ENCODE measurements at regions of chr5 and their contacts with region 1.

Region 1: GRCh38 chr5:100818340-100818739 is 84.7 kb downstream of the ST8SIA4 start:
- DNase-seq: no peak
- ATAC-seq: no peak
- H3K4me3 ChIP-seq: no peak overlapping the region
- H3K4me3 Mint-ChIP-seq: no peak overlapping the region
- H3K27ac ChIP-seq: no peak overlapping the region
- H3K27ac Mint-ChIP-seq: peak overlapping the region in 3 of 9 donors; percentile 23 to 58 (median 43)
- H3K4me1 ChIP-seq: no peaks in the 10 kb centered on the region
- H3K4me1 Mint-ChIP-seq: peaks cover 6 to 58% (median 30%) of the 10 kb centered on the region in 7 donors
- H3K27me3 ChIP-seq: no peaks in the 10 kb centered on the region
- H3K27me3 Mint-ChIP-seq: no peaks in the 10 kb centered on the region

Region 2: DNA sequence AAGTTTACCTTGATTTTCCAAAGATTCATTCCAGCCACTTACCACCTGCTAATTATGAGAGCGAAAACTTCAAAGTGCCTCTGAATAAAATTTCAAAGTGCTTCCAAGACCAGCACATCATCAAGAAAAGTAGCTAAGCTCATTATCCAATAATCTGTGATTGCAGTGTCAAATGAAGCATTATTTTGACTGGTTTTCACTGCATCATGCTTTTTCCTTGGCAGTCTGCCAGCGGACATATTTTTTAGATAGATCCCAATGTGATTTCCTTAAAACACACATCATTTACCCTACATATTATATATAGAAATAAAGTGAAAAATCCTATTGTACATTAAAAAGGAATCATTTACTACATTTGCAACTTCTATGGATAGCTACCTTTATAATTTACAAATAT is 791.7 kb before region 1 on chr5:
- CTCF ChIA-PET with region 1: no interaction called
- POLR2A ChIA-PET with region 1: no interaction called
- intact Hi-C with region 1: no loop called
- DNase-seq: no peak
- ATAC-seq: no peak
- H3K4me3 ChIP-seq: no peak overlapping the region
- H3K4me3 Mint-ChIP-seq: no peak overlapping the region
- H3K27ac ChIP-seq: no peak overlapping the region
- H3K27ac Mint-ChIP-seq: no peak overlapping the region
- H3K4me1 ChIP-seq: no peaks in the 10 kb centered on the region
- H3K4me1 Mint-ChIP-seq: peaks cover 0 to 1% (median 0%) of the 10 kb centered on the region in 7 donors
- H3K27me3 ChIP-seq: no peaks in the 10 kb centered on the region
- H3K27me3 Mint-ChIP-seq: no peaks in the 10 kb centered on the region

Region 3: GRCh38 chr5:100161868-100162267 is 656.5 kb before region 1 on chr5:
- CTCF ChIA-PET with region 1: no interaction called
- POLR2A ChIA-PET with region 1: no interaction called
- intact Hi-C with region 1: no loop called
- DNase-seq: no peak
- ATAC-seq: no peak
- H3K4me3 ChIP-seq: no peak overlapping the region
- H3K4me3 Mint-ChIP-seq: no peak overlapping the region
- H3K27ac ChIP-seq: no peak overlapping the region
- H3K27ac Mint-ChIP-seq: no peak overlapping the region
- H3K4me1 ChIP-seq: no peaks in the 10 kb centered on the region
- H3K4me1 Mint-ChIP-seq: no peaks in the 10 kb centered on the region
- H3K27me3 ChIP-seq: no peaks in the 10 kb centered on the region
- H3K27me3 Mint-ChIP-seq: no peaks in the 10 kb centered on the region

Region 4: DNA sequence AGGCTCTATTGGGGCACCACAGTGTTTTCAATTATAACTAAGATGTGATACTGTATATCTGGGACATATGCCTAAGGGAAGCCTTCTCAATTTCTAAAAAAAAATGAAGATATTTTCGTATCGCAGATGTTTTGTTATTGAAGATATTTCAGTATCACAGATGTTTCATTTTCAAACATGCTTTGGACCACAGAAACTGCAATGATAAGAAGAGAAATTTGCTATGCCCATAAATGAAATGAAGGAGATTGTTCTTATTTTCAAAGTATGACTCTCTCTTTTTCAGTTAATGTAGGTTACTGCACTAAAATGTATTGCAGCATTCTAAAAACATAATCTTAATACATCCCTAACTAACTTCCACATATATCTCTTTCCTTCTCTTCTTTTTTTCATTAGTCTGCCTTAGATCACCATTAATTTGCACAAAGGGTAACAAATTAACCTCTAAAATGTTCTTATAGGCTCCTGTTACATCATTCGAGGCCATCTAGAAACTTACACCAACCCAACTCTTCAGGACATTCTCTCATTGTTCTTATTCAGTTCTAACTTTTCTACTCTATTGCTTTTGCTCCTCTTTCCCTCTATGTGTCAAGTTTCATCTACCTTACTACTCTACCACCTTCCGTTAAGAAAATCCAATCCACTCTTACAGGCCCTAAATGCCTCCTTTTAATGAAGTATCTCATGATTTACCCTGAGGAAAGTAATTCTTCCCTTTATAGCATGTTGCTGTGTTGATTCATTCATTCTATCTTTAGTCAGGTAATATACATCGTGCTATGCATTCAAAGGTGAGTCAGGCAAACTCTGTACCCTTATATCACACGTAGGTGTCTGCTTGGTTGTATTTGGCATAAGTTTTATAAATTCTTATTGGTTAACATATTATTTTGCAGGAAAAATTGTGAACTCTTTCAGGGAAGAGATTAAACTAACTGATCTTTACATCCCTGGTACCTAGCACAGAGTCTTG is 14.2 kb after region 1 on chr5:
- CTCF ChIA-PET with region 1: no interaction called
- POLR2A ChIA-PET with region 1: no interaction called
- intact Hi-C with region 1: loop called in 1 of 2 experiments (anchors 2 kb)
- DNase-seq: no peak
- ATAC-seq: no peak
- H3K4me3 ChIP-seq: no peak overlapping the region
- H3K4me3 Mint-ChIP-seq: no peak overlapping the region
- H3K27ac ChIP-seq: no peak overlapping the region
- H3K27ac Mint-ChIP-seq: peak overlapping the region in 1 of 9 donors; percentile 1
- H3K4me1 ChIP-seq: peaks cover 0 to 13% of the 10 kb centered on the region in 2 donors
- H3K4me1 Mint-ChIP-seq: peaks cover 14 to 39% (median 33%) of the 10 kb centered on the region in 7 donors
- H3K27me3 ChIP-seq: no peaks in the 10 kb centered on the region
- H3K27me3 Mint-ChIP-seq: no peaks in the 10 kb centered on the region